PC-9 (cell line): ENCODE measurements at regions of chr1 and their contacts with region 1.

Region 1: DNA sequence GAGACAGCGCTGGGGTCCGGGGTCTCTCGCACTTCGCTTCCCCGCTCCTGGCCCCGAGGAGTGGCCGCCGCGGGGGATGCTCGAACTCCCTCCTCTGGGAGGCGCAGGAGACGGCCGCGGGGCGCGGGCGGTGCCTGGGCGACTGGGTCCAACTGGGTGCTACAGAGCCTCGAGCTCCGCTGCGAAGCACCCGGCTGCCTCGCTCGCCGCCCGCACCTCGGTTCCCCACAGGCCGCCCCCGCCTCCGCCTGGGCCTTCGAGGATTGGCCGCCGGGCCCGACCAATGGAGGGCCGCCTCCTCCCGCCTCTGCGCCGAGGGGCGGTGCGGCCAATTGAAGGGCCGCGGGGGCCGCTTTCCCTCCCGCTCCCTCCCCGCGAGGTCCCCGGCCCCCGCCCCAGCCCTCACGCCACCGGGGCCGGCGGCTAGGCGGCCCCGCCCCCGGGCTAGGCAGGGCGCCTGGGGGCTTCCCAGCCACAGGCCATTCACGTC is at the start of gene CNN3:
- DNase-seq: peak; percentile 80 to 95
- H3K4me3 ChIP-seq: peak within 1 kb of the TSS; percentile 67
- H3K27ac ChIP-seq: peak within 1 kb of the TSS; percentile 64
- H3K4me1 ChIP-seq: peaks cover 67% of the 10 kb centered on the region
- H3K27me3 ChIP-seq: no peaks in the 10 kb centered on the region
- CTCF ChIP-seq: no peak
- total RNA-seq, gene CNN3: 125 and 135 TPM in 2 replicates

Region 2: DNA sequence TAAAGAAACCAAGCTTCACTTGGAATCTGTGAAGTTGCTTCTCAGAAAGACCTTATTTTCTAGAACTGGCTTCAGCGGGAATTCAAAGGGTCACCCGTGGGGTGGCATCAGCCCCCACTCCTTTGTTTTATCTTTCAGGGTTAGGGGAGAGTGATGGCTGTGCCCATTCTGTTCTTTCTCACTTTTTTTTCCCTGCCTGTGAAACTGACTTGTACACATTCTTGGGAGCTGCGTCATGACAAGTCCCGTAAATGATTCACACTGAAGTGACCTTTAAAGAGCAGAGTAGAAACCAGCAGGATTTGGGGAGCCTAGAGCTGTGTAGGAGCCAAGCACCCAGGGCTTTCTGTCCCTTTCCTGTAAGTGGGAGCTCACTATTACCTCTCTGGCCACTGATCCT is 63.0 kb before region 1 on chr1:
- CTCF ChIA-PET with region 1: no interaction called
- POLR2A ChIA-PET with region 1: interaction called, 4 read pairs
- intact Hi-C with region 1: loop called (anchors 2 kb)
- DNase-seq: peak; percentile 65 to 96
- H3K4me3 ChIP-seq: peak overlapping the region; percentile 36
- H3K27ac ChIP-seq: peak overlapping the region; percentile 96
- H3K4me1 ChIP-seq: peaks cover 50% of the 10 kb centered on the region
- H3K27me3 ChIP-seq: no peaks in the 10 kb centered on the region
- CTCF ChIP-seq: no peak

Region 3: GRCh38 chr1:94909486-94909885 is 17.5 kb before region 1 on chr1:
- CTCF ChIA-PET with region 1: no interaction called
- POLR2A ChIA-PET with region 1: no interaction called
- intact Hi-C with region 1: no loop called
- DNase-seq: no peak
- H3K4me3 ChIP-seq: no peak overlapping the region
- H3K27ac ChIP-seq: no peak overlapping the region
- H3K4me1 ChIP-seq: 0 out of 2 replicates have a peak, but pooled peaks cover 7% of the 10 kb centered on the region
- H3K27me3 ChIP-seq: no peaks in the 10 kb centered on the region
- CTCF ChIP-seq: no peak

Region 4: DNA sequence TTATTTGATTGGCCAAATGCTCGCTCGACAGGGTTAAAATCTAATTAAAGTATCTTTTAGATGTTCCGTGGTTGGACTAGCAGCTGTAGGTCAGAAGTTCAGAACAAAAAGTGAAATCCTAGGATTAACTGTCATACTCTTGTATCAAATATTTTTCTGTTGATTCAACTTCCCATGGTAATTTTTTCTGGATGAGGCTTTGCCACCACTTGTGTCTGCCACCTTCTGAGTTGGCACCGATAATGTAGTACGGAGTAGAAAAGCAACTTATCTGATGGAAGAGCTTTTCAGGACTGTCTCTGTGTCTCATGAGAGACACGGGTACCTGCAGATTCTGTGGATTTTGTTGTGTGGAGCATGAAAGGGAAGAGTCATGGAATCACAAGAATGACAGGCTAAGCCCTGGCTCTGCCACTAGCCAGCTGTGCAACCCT is 44.5 kb after region 1 on chr1:
- CTCF ChIA-PET with region 1: no interaction called
- POLR2A ChIA-PET with region 1: no interaction called
- intact Hi-C with region 1: loop called (anchors 5 kb)
- DNase-seq: no peak
- H3K4me3 ChIP-seq: no peak overlapping the region
- H3K27ac ChIP-seq: no peak overlapping the region
- H3K4me1 ChIP-seq: 0 out of 2 replicates have a peak, but pooled peaks cover 4% of the 10 kb centered on the region
- H3K27me3 ChIP-seq: no peaks in the 10 kb centered on the region
- CTCF ChIP-seq: no peak

Region 5: GRCh38 chr1:95023399-95024043 is 96.6 kb after region 1 on chr1:
- CTCF ChIA-PET with region 1: no interaction called
- POLR2A ChIA-PET with region 1: interaction called, 6 read pairs
- intact Hi-C with region 1: loop called (anchors 5 kb)
- DNase-seq: peak in 1 of 2 experiments; percentile 48
- H3K4me3 ChIP-seq: no peak overlapping the region
- H3K27ac ChIP-seq: peak overlapping the region; percentile 25; the same call in 1 of the 2 replicates
- H3K4me1 ChIP-seq: peaks cover 19% of the 10 kb centered on the region
- H3K27me3 ChIP-seq: no peaks in the 10 kb centered on the region
- CTCF ChIP-seq: no peak